ENCODE measurements at regions of chr3 and their contacts with region 1.

Region 1: GRCh38 chr3:107235928-107236315 is 141.3 kb upstream of the CCDC54 start:
- DNase-seq: peak; percentile 66
- ATAC-seq: peak; percentile 86
- H3K4me3 ChIP-seq: peak overlapping the region; percentile 47 to 70 (median 60); a peak in 5 of 6 replicates
- H3K27ac ChIP-seq: no peak overlapping the region
- H3K4me1 ChIP-seq: peaks cover 17% of the 10 kb centered on the region
- H3K27me3 ChIP-seq: peaks cover 1 to 11% of the 10 kb centered on the region in 2 experiments; a peak in 3 of 5 replicates
- CTCF ChIP-seq: peak; percentile 84
- EP300 ChIP-seq: no peak
- POLR2A ChIP-seq: no peak
- RAD21 ChIP-seq: peak; percentile 69

Region 2: GRCh38 chr3:107429320-107430181 is 193.6 kb after region 1 on chr3:
- CTCF ChIA-PET with region 1: no interaction called
- POLR2A ChIA-PET with region 1: no interaction called
- in situ Hi-C with region 1: loop called (anchors 10 kb)
- intact Hi-C with region 1: no loop called
- DNase-seq: peak; percentile 56
- ATAC-seq: peak; percentile 87
- H3K4me3 ChIP-seq: peak overlapping the region in 1 of 3 experiments; percentile 31; a peak in 1 of 6 replicates
- H3K27ac ChIP-seq: no peak overlapping the region
- H3K4me1 ChIP-seq: peaks cover 27% of the 10 kb centered on the region
- H3K27me3 ChIP-seq: peaks cover 0 to 25% of the 10 kb centered on the region in 2 experiments; a peak in 3 of 5 replicates
- CTCF ChIP-seq: peak; percentile 81
- EP300 ChIP-seq: no peak
- POLR2A ChIP-seq: no peak
- RAD21 ChIP-seq: peak; percentile 39; the same call in 1 of the 2 replicates

Region 3: DNA sequence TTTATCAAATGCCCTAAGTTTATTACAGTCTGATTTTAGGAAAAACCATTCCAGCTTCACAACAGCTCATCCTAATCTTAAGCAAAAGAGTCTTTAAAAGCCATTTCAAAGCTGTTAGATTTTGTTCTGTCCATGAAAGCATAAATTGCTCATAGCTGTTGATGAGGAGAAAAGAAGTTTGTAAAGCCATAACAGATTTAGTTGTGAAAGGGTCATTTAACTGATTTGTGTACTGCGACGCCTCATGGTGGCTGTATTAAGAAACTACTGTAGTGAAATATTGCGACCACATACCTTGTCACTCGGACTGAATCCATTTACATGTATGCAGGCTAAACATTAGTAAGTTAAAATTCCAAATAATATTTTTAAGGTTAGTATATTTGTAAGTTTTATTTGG is 307.7 kb after region 1 on chr3:
- CTCF ChIA-PET with region 1: interaction called, 5 read pairs
- POLR2A ChIA-PET with region 1: no interaction called
- in situ Hi-C with region 1: loop called (anchors 25 kb)
- intact Hi-C with region 1: loop called (anchors 1 kb)
- DNase-seq: peak; percentile 12
- ATAC-seq: no peak
- H3K4me3 ChIP-seq: no peak overlapping the region
- H3K27ac ChIP-seq: no peak overlapping the region
- H3K4me1 ChIP-seq: 0 out of 2 replicates have a peak, but pooled peaks cover 5% of the 10 kb centered on the region
- H3K27me3 ChIP-seq: no peaks in the 10 kb centered on the region
- CTCF ChIP-seq: peak; percentile 38; the same call in 1 of the 2 replicates
- EP300 ChIP-seq: no peak
- POLR2A ChIP-seq: no peak
- RAD21 ChIP-seq: no peak

Region 4: DNA sequence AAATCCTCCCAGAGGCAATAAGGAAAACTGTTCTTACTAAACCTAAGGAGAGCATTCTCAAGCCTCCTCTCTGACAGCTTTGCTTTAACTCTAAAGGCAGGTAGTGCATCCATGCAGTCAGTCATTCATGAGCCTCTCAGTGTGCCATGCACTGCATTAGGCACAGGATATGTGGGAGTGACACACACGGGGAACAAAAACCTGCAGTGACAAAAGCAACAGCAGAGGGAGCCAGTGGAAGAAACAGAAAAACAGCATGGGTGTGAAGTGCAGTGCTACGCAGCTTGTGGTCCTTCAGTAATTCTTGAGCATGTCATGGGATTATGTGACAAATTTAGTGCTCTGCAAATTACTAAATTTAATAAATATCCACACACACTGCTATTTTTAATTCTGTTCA is 517.6 kb after region 1 on chr3:
- CTCF ChIA-PET with region 1: no interaction called
- POLR2A ChIA-PET with region 1: no interaction called
- in situ Hi-C with region 1: no loop called
- intact Hi-C with region 1: loop called (anchors 5 kb)
- DNase-seq: peak; percentile 47
- ATAC-seq: peak; percentile 98
- H3K4me3 ChIP-seq: no peak overlapping the region
- H3K27ac ChIP-seq: no peak overlapping the region
- H3K4me1 ChIP-seq: no peaks in the 10 kb centered on the region
- H3K27me3 ChIP-seq: no peaks in the 10 kb centered on the region
- CTCF ChIP-seq: peak; percentile 76
- EP300 ChIP-seq: no peak
- POLR2A ChIP-seq: no peak
- RAD21 ChIP-seq: 0 out of 2 replicates have a peak, but pooled peaks have one; percentile 39

Region 5: DNA sequence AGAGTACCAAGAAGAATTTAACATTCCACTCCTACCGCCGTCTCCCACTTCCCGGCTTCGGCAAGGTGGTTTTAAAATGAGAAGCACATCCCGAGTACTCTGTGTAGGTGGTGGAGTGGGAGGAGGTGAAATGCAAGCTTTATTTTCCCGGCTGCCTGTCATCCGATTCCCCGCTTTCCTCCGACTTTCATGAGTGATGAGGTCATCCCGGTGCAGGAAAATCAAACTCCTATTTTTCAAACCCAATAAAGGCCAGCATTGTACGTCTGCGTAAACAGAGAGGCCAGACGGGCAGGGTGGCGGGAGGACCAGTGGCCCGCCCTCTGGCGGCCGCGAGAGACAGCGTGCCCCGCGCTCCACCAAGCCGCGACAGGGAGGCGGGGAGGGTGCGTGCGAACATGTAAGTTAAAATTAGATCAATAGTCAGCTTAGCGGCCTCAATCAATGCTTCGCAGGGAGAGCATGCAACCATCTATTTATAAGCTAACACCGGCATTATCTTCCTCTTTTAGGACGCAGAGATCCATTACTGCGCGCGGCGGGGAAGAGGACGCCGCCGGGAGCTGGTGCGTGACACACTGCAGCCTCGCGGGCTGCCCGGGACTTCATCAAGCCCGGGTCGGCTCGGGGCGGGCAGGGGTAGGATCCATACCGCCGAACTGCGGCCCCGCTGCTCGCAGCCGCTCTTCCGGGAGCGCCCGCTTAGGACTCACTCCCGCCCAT is 691.6 kb after region 1 on chr3:
- CTCF ChIA-PET with region 1: interaction called, 4 read pairs
- POLR2A ChIA-PET with region 1: no interaction called
- in situ Hi-C with region 1: no loop called
- intact Hi-C with region 1: loop called (anchors 1 kb)
- DNase-seq: peak; percentile 66
- ATAC-seq: peak; percentile 100
- H3K4me3 ChIP-seq: peak overlapping the region; percentile 55 to 63 (median 57)
- H3K27ac ChIP-seq: no peak overlapping the region
- H3K4me1 ChIP-seq: peaks cover 6% of the 10 kb centered on the region; the same call in 1 of the 2 replicates
- H3K27me3 ChIP-seq: peaks cover 4 to 21% of the 10 kb centered on the region in 2 experiments; a peak in 4 of 5 replicates
- CTCF ChIP-seq: peak; percentile 91
- EP300 ChIP-seq: peak in 1 of 2 experiments; percentile 7; a peak in 1 of 4 replicates
- POLR2A ChIP-seq: no peak
- RAD21 ChIP-seq: peak; percentile 76

Region 6: DNA sequence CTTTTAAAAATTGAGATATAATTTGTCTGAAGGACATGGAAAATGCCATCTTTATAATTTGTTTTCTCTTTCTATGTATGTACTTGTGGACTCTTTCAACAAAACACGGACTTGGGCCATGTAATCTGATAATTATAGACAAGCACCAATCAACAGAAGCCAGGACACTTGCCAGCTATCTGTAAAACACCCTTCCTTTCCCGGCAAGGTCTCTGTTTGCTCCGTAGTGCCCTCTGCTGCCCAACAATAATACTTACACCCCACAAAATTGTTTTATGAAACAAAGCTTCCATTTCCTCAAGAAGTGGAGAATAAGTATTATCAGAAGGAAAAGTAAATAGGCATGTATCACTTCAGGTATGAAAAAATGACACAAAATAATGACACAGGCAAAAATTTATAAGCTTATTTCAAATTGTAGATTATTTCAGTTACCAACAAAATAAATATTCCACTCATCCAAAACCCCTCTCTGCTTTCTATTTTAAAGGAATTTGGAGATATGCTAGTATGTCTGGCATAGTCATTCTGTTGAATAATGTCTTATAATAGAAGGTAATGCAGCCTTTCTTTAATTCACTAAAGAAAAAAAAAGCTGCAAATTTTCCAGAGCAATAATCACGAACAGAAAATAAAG is 1241.7 kb after region 1 on chr3:
- CTCF ChIA-PET with region 1: interaction called, 10 read pairs
- POLR2A ChIA-PET with region 1: no interaction called
- in situ Hi-C with region 1: no loop called
- intact Hi-C with region 1: no loop called
- DNase-seq: peak; percentile 52
- ATAC-seq: peak; percentile 80
- H3K4me3 ChIP-seq: no peak overlapping the region
- H3K27ac ChIP-seq: no peak overlapping the region
- H3K4me1 ChIP-seq: no peaks in the 10 kb centered on the region
- H3K27me3 ChIP-seq: no peaks in the 10 kb centered on the region; a peak in 1 of 5 replicates
- CTCF ChIP-seq: peak; percentile 71
- EP300 ChIP-seq: no peak
- POLR2A ChIP-seq: no peak
- RAD21 ChIP-seq: no peak

Measured in HepG2 (cell line).